ENCODE measurements at regions of chr13 and their contacts with region 1.

Region 1: DNA sequence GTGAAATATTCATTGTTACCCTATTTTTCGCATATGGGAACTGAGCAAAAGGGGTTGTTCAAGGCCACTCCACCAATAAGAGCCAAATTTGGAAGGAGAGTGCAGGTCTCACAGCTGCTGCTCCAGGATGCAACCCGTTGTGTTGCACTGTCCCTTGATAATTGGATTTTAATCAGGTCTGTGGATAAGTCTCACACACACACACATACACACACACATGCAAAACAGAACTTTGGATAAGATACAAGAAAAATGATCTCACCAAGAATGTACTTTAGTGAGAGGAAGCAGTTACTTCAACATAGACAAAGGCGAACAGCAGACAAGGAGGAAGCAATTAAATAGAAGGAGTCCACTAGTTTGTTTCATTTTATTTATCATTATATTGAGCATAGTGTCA is 127.3 kb upstream of the EDNRB start:
- DNase-seq: no peak
- ATAC-seq: no peak
- H3K4me3 ChIP-seq: no peak overlapping the region
- H3K27ac ChIP-seq: no peak overlapping the region
- H3K4me1 ChIP-seq: no peaks in the 10 kb centered on the region
- H3K27me3 ChIP-seq: no peaks in the 10 kb centered on the region
- CTCF ChIP-seq: no peak

Region 2: GRCh38 chr13:77898097-77898496 is 147.8 kb before region 1 on chr13:
- CTCF ChIA-PET with region 1: no interaction called
- POLR2A ChIA-PET with region 1: no interaction called
- intact Hi-C with region 1: loop called (anchors 10 kb)
- DNase-seq: peak; percentile 33
- ATAC-seq: peak; percentile 71
- H3K4me3 ChIP-seq: no peak overlapping the region
- H3K27ac ChIP-seq: peak overlapping the region; percentile 79
- H3K4me1 ChIP-seq: peaks cover 14% of the 10 kb centered on the region; the same call in 1 of the 2 replicates
- H3K27me3 ChIP-seq: no peaks in the 10 kb centered on the region
- CTCF ChIP-seq: no peak

Region 3: DNA sequence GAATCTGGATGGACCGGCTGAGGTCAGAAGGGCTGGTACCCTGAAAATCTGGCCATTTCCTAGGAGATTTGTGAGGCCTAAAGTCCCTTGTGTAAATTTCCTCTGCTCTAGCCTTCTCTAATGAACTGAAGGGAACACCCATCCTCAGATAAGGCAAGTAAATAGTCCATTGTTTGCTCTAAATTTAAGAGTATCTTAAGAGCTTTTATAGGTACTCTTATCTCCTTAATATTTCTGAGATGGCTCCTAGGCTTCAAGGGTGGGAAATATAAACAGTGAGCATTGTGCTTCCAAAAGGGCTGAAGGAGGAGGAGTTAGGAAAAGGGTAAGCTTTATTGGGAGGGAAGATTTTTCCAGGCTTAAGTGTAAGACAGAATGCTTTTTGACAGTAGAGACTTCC is 21.4 kb after region 1 on chr13:
- CTCF ChIA-PET with region 1: no interaction called
- POLR2A ChIA-PET with region 1: no interaction called
- intact Hi-C with region 1: loop called (anchors 1 kb)
- DNase-seq: no peak
- ATAC-seq: peak; percentile 37
- H3K4me3 ChIP-seq: no peak overlapping the region
- H3K27ac ChIP-seq: no peak overlapping the region
- H3K4me1 ChIP-seq: no peaks in the 10 kb centered on the region
- H3K27me3 ChIP-seq: no peaks in the 10 kb centered on the region
- CTCF ChIP-seq: no peak

Region 4: DNA sequence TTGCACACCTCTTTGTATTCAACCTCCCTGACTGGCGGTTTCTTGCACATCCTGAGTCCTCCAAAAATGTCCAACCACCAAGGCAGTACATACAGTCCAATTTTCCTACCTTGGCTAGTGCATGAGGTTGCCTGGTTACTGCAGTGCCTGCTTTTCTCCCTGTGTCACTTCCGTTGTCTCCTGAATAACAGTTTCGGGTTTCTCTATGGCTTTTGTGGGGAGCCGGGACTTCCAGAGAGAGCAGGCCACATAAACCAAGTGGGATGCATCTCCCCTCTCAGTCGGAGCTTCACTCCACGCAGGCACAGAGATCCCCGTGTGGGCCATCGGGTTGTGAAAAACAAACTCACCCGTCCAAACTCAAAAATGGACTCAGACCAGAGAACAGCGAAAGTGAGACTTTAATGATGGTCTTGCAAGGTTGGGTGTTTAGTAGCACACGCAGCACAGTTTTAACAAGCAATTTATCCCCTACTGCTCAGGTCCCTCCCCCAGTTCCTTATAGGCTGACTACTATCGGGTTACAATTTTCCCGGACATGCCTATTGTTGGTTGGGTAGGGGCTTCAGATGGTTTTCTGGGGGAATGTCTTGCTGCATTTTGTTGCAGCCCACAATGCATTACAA is 384.4 kb after region 1 on chr13:
- CTCF ChIA-PET with region 1: no interaction called
- POLR2A ChIA-PET with region 1: no interaction called
- intact Hi-C with region 1: no loop called
- DNase-seq: no peak
- ATAC-seq: no peak
- H3K4me3 ChIP-seq: no peak overlapping the region
- H3K27ac ChIP-seq: no peak overlapping the region
- H3K4me1 ChIP-seq: no peaks in the 10 kb centered on the region
- H3K27me3 ChIP-seq: peaks cover 23% of the 10 kb centered on the region
- CTCF ChIP-seq: no peak

Measured in PC-3 (cell line).